PC-9 (cell line): ENCODE measurements at regions of chr6 and their contacts with region 1.

Region 1: DNA sequence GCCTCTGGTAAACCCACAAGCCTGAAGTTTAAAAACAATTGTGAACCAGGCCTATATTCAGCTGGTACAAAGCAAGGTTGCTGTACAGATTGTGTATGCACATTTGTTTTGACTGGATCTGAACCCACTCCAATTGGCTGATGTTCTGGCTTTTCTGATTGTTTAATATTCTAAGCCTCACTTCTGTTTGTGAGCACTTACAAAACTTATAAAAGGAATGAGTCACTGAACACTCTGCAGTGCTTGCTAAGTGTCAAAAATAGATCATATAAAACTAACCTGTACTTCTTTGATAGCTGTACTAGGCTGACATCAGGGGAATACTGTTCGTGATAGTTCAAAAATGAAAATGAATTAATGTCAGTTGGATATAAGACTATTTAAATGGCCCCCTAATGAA is 12.1 kb downstream of the COL21A1 start:
- DNase-seq: no peak
- H3K4me3 ChIP-seq: no peak overlapping the region
- H3K27ac ChIP-seq: no peak overlapping the region
- H3K4me1 ChIP-seq: no peaks in the 10 kb centered on the region
- H3K27me3 ChIP-seq: no peaks in the 10 kb centered on the region
- CTCF ChIP-seq: no peak

Region 2: DNA sequence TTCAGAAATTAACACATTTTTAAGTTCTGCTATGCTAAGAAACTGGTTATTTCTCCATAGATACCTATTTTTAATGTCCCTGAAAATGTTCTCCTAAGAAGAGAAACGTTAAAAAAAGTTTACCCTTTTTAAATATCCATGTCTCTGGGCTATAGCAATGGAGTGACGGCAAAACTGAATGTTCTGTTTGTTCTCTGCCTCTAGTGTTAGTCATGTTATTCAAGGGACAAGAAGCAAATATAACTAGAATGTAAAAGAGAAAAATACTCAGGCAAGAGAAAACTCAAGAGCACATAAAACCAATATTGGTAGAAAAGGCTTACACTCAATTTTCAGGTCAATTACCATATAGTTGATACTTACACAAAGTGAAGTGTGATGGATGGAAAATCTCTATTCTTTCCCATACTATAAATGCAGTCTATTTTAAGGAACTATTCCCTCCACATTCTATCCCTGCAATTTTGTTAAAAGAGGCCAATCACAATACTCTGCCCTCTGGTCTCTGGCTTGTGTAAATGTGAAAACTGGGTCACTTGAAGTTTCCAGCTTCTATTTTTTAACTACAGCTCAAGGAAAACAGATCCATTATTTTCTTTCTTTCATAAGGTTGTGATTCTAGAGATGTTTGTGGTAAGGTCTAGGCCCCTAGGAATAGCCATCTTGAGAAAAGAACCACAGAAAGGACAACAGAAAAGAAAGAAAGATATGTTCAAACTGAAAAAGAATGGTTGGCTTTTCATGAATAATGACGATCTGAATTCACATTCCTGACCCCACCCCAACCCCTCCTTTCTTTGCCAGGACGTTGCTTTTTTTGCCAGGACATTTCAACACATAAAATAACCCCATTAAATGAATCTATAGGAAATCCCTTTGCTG is 1588.9 kb before region 1 on chr6:
- CTCF ChIA-PET with region 1: no interaction called
- POLR2A ChIA-PET with region 1: interaction called, 10 read pairs
- intact Hi-C with region 1: no loop called
- DNase-seq: no peak
- H3K4me3 ChIP-seq: no peak overlapping the region
- H3K27ac ChIP-seq: no peak overlapping the region
- H3K4me1 ChIP-seq: no peaks in the 10 kb centered on the region
- H3K27me3 ChIP-seq: no peaks in the 10 kb centered on the region
- CTCF ChIP-seq: no peak